Right ventricle myocardium inferior (tissue), 1 donor: ENCODE measurements at regions of chr12 and their contacts with region 1.

Region 1: GRCh38 chr12:121767525-121768016 is 25.9 kb downstream of the RHOF start:
- DNase-seq: peak; percentile 78
- ATAC-seq: peak; percentile 82

Region 2: DNA sequence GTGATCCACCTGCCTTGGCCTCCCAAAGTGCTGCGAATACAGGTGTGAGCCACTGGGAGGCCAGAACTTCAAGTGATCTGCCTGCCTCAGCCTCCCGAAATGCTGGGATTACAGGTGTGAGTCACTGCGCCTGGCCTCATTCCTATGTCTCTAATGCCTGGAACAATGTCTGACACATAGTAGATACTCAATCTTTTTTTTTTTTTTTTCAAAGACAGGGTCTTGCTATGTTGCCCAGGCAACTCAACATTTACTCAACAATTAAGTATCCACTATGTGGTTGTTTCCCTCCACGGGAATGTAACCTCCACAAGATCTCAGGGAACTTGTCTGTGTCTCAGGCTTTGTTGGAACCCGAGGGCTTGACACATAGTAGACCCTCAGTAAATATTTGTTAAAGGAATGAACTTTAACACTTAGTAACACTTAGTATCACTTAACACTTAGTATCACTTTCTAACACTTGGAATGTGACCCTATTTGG is 58.1 kb before region 1 on chr12:
- intact Hi-C with region 1: loop called (anchors 2 kb)
- DNase-seq: no peak
- ATAC-seq: no peak

Region 3: GRCh38 chr12:121823101-121823726 is 55.6 kb after region 1 on chr12:
- intact Hi-C with region 1: no loop called
- DNase-seq: peak; percentile 42
- ATAC-seq: no peak

Region 4: DNA sequence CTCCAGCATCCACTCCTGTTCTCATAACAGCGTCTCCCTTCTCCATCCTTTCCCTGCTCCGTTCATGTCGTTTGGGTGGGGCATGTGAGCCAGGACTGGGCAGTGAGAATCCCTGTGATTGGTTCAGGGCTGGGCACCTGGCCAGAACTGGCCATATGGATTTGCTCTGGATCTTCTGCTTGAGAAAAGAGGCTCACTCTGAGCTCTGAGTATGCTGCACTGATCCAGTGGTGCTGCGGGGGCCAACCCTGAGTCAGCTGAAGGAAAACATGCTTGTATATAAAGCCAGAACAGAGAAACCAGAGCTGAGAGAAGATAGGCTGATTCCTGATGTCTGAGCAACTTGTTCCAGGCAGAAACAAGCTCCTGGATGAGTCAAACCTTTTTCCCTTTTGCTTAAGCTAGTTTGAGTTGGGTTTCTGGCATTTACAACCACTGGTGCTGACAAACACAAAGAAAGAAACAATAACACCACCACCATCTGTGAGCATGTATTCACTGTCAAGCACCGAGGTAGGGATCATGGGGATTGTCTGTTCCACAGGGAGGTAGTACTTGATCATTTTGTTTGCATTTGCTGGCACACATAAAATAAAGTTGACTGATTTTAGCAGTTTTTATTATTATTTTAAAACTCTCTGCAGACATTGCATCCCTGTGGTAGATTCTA is 105.1 kb after region 1 on chr12:
- intact Hi-C with region 1: no loop called
- DNase-seq: no peak
- ATAC-seq: peak; percentile 57